ENCODE measurements at regions of chr6 and their contacts with region 1.

Region 1: DNA sequence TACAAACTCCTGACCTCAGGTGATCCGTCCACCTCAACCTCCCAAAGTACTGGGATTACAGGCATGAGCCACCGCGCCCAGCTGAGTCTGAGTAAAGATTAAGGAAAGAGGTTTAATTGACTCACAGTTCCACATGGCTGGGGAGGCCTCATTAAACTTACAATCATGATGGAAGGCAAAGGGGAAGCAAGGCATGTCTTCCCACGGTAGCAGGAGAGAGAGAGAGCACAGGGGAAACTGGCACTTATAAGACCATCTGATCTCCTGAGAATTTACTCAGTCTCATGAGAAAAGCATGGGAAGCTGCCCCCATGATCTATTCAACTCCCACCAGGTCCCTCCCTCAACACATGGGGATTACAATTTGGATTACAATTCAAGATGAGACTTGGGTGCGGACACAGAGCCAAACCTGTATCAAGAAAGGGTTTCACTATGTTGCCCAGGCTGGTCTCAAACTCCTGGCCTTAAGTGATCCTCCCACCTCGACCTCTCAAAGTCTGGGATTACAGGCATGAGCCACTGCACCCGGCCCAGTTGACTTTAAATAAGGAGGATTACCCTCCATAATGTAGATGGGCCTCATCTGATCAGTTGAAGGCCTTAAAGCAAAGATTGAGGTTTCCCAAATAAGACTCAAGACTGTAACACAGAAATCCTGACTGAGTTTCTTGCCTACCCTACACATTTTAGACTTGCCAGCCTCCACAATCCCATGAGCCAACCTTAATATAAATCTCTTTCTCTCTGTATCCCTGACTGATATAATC is 13.1 kb upstream of the PEX7 start:
- DNase-seq: no peak
- H3K4me3 ChIP-seq: no peak overlapping the region
- H3K27ac ChIP-seq: no peak overlapping the region
- H3K4me1 ChIP-seq: no peaks in the 10 kb centered on the region
- H3K27me3 ChIP-seq: no peaks in the 10 kb centered on the region
- CTCF ChIP-seq: no peak
- EP300 ChIP-seq: no peak
- POLR2A ChIP-seq: no peak

Region 2: GRCh38 chr6:135360222-135360621 is 1449.1 kb before region 1 on chr6:
- intact Hi-C with region 1: loop called in 1 of 4 experiments (anchors 5 kb)
- DNase-seq: no peak
- H3K4me3 ChIP-seq: no peak overlapping the region
- H3K27ac ChIP-seq: no peak overlapping the region
- H3K4me1 ChIP-seq: no peaks in the 10 kb centered on the region
- H3K27me3 ChIP-seq: no peaks in the 10 kb centered on the region
- CTCF ChIP-seq: no peak
- EP300 ChIP-seq: no peak
- POLR2A ChIP-seq: no peak